Transverse colon (tissue), 4 donors: ENCODE measurements at regions of chr7 and their contacts with region 1.

Region 1: DNA sequence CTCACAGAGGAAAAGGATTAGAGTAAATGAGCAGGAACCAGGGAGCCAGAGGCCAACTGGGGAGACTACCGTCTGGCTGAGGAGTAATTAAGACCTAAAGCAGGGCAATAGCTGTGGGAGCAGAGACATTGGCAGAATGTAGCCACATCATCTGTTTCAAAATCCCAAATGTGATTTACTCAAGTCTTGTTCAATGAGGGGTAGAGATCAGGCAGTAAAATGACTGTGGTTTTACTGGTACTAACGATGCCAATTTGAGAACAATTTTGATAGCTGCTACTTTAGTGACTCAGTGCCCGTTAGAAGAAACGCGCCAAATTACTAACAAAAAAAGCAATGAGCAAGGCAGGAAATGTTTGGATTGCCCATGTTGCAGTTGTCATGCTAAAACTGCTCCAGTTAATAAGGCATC is 12.7 kb upstream of the MIOS start:
- DNase-seq: no peak
- H3K4me3 ChIP-seq: no peak overlapping the region
- H3K27ac ChIP-seq: no peak overlapping the region
- H3K4me1 ChIP-seq: no peaks in the 10 kb centered on the region
- H3K27me3 ChIP-seq: no peaks in the 10 kb centered on the region
- CTCF ChIP-seq: no peak
- EP300 ChIP-seq: no peak
- POLR2A ChIP-seq: no peak

Region 2: DNA sequence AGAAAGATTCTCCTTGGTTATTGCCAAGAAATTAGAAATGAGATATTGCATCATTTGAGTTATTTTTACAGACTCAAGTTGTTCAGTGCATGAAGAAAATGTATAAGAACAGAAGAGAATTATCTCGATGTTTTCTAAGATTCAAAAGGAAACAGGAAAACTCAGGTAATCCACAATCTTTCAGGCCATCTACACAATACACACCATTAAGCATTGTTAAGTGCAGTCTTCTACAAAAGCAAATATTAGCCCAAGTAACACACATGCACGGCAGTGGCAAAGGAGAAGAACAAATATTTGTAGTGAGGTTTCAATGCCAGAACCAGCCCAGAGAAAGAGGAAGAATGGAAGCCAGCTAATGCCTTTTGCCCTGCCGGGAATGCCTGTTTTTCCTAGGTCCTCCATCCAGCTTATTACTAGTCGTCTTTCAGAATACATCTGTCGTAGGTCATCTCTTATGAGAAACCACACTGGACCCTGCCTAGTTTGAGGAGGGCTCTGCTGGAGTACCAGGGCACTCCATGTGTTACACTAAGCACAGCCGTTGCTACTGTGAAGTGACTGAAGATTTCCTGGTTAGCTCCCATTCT is 439.2 kb before region 1 on chr7:
- in situ Hi-C with region 1: loop called in 1 of 4 experiments (anchors 10 kb)
- intact Hi-C with region 1: no loop called
- DNase-seq: no peak
- H3K4me3 ChIP-seq: no peak overlapping the region
- H3K27ac ChIP-seq: peak overlapping the region in 1 of 4 donors; percentile 14
- H3K4me1 ChIP-seq: no peaks in the 10 kb centered on the region
- H3K27me3 ChIP-seq: no peaks in the 10 kb centered on the region
- CTCF ChIP-seq: no peak
- EP300 ChIP-seq: no peak
- POLR2A ChIP-seq: no peak

Region 3: DNA sequence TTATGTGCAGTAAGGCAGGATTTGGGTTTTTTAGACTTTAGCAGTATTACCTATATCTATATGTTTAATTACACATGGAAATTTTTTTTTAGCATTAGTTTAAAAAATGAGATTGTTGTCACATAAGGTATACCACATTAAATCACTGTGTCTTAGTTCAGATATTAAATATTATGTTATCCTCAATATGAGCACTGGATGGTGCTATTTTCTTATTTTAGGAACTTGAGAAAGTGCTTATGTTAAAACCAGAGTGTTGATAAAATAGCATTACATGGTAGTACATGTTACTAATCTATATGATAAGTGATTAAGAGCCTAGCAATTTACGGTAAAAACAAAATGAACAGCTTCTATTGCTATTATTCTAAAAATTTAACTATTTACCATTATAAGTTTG is 41.4 kb after region 1 on chr7:
- in situ Hi-C with region 1: no loop called
- intact Hi-C with region 1: no loop called
- DNase-seq: no peak
- H3K4me3 ChIP-seq: no peak overlapping the region
- H3K27ac ChIP-seq: no peak overlapping the region
- H3K4me1 ChIP-seq: no peaks in the 10 kb centered on the region
- H3K27me3 ChIP-seq: no peaks in the 10 kb centered on the region
- CTCF ChIP-seq: peak; percentile 29 to 54 (median 41)
- EP300 ChIP-seq: no peak
- POLR2A ChIP-seq: no peak